A549 (cell line): ENCODE measurements at regions of chr17 and their contacts with region 1.

Region 1: DNA sequence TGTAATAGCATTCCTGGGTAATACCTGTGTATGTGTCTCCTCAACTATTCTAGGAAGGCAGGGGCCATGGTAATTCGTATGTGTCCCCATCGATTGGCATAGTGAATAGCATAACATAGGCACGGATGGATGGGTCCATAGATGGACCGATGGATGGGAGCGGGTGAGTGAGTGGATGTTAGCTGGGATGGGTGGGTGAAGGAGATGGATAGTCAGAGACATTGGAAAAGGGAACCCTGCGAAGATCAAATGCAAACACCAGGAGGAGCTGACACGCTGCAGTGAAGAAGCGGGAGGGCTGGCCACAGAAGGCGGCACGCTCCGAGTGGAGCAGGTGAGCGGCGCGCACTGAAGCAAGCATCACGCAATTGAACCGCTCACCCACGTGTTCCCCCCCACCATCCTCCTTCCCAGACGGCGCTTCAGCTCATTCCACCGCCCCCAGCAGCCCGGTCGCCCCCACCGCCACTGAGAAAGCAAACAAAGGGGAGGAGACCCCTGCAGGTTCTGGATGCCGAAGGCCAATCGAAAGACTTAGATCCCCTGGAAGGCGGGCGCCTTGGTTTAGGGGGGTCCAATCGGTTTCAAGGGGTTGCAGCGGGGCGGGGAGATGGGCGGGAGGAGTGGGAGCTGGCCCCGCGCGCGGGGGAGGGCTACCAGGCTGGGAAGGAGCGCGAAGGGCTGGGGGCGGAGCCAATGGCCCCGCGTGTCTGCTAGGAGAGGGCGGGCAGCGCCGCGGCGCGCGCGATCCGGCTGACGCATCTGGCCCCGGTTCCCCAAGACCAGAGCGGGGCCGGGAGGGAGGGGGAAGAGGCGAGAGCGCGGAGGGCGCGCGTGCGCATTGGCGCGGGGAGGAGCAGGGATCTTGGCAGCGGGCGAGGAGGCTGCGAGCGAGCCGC is at the start of gene ARRB2:
- DNase-seq: peak; percentile 99 to 100
- ATAC-seq: peak; percentile 91
- H3K4me3 ChIP-seq: peak within 1 kb of the TSS; percentile 83
- H3K27ac ChIP-seq: peak within 1 kb of the TSS; percentile 94
- H3K4me1 ChIP-seq: peaks cover 27% of the 10 kb centered on the region
- CTCF ChIP-seq: peak; percentile 88
- EP300 ChIP-seq: no peak
- POLR2A ChIP-seq: peak; percentile 74
- RAD21 ChIP-seq: peak; percentile 91 to 94
- polyA plus RNA-seq, gene ARRB2: 73.1 and 74.9 TPM in 2 replicates

Region 2: DNA sequence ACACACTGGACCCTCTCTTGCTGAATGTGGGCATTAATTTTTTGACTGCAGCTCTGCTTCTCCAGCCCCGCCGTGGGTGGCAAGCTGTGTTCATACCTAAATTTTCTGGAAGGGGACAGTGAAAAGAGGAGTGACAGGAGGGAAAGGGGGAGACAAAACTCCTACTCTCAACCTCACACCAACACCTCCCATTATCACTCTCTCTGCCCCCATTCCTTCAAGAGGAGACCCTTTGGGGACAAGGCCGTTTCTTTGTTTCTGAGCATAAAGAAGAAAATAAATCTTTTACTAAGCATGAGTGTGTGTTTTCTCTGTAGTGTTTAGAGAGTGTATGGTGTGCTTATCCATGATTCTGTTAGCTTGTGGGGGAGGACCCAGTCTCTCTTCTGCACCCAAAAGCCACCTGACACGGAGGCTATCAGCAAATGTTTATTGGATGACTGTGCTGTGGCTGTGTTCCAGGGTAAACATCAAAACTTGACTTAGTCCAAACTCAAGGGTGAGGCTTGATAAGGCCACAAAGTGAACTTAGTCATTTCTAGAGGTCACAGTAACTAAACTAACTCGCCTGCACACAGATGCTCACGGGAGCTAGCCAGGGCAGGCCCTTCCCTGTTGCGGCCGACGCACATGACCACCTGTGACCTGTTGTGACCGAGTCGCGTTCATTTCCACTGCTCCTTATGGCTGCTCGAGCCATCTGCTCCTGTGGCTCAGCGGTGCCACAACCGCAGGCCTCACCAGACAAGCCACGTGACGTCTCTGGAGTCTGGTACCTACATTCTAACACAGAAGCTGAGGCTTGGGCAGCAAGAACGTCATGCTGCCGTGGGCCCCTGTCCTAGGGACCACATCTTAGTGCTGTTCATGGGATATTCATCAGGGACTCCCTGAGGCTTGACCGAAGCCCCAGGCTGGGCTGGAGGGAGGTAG is 11.4 kb after region 1 on chr17:
- CTCF ChIA-PET with region 1: interaction called, 57 read pairs
- POLR2A ChIA-PET with region 1: interaction called, 11 read pairs
- DNase-seq: peak; percentile 85 to 95
- ATAC-seq: peak; percentile 72 to 75
- H3K4me3 ChIP-seq: peak overlapping the region; percentile 26
- H3K27ac ChIP-seq: peak overlapping the region; percentile 85 to 90
- H3K4me1 ChIP-seq: peaks cover 56% of the 10 kb centered on the region
- CTCF ChIP-seq: no peak
- EP300 ChIP-seq: peak; percentile 73 to 84; a peak in 3 of 5 replicates
- POLR2A ChIP-seq: no peak
- RAD21 ChIP-seq: peak in 1 of 2 experiments; percentile 41; a peak in 2 of 5 replicates

Region 3: GRCh38 chr17:4739122-4740024 is 29.3 kb after region 1 on chr17 and contains the starts of genes CXCL16 and ZMYND15:
- CTCF ChIA-PET with region 1: interaction called, 68 read pairs
- POLR2A ChIA-PET with region 1: interaction called, 3 read pairs
- DNase-seq: peak; percentile 39 to 85
- ATAC-seq: peak; percentile 63 to 76
- H3K4me3 ChIP-seq: peak within 1 kb of the TSS; percentile 86
- H3K27ac ChIP-seq: peak within 1 kb of the TSS; percentile 79 to 87
- H3K4me1 ChIP-seq: peaks cover 9% of the 10 kb centered on the region
- CTCF ChIP-seq: no peak
- EP300 ChIP-seq: no peak
- POLR2A ChIP-seq: peak; percentile 38
- RAD21 ChIP-seq: no peak; a peak in 1 of 5 replicates
- polyA plus RNA-seq, gene CXCL16: 13.8 and 20.5 TPM in 2 replicates
- polyA plus RNA-seq, gene ZMYND15: 0.15 and 0.16 TPM in 2 replicates

Region 4: DNA sequence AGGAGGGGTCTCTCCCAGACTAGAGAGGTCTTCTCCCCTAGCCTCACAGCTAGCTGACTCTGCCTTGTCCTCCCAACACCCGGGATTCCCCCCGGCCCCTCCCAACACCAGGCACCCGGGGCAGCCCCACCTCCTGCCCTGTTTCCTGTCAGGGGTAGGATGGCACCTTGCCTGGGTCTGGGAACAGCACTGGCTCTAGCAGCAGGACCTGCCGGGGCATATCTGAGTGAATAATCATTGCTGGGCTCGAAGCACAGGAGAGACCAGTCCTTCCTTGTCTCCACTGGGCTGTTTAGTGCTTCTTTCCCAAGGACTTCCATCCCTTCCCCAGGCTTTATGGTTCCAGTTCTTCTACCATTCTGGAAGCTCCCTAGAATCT is 148.8 kb after region 1 on chr17:
- CTCF ChIA-PET with region 1: interaction called, 11 read pairs
- POLR2A ChIA-PET with region 1: no interaction called
- DNase-seq: no peak
- ATAC-seq: peak; percentile 51 to 64; a peak in 4 of 6 replicates
- H3K4me3 ChIP-seq: no peak overlapping the region
- H3K27ac ChIP-seq: peak overlapping the region; percentile 5 to 76; a peak in 4 of 6 replicates
- H3K4me1 ChIP-seq: peaks cover 24% of the 10 kb centered on the region
- CTCF ChIP-seq: no peak
- EP300 ChIP-seq: no peak
- POLR2A ChIP-seq: no peak
- RAD21 ChIP-seq: no peak

Region 5: GRCh38 chr17:4891411-4892342 is 181.6 kb after region 1 on chr17:
- CTCF ChIA-PET with region 1: interaction called, 69 read pairs
- POLR2A ChIA-PET with region 1: no interaction called
- DNase-seq: no peak
- ATAC-seq: no peak
- H3K4me3 ChIP-seq: no peak overlapping the region
- H3K27ac ChIP-seq: no peak overlapping the region
- H3K4me1 ChIP-seq: no peaks in the 10 kb centered on the region
- CTCF ChIP-seq: no peak
- EP300 ChIP-seq: no peak
- POLR2A ChIP-seq: no peak
- RAD21 ChIP-seq: no peak